ENCODE measurements at regions of chr6 and their contacts with region 1.

Region 1: GRCh38 chr6:159726918-159727716 is at the start of gene WTAP:
- DNase-seq: peak; percentile 98
- ATAC-seq: peak; percentile 86
- H3K4me3 Mint-ChIP-seq: peak within 1 kb of the TSS; percentile 88
- H3K27ac Mint-ChIP-seq: peak within 1 kb of the TSS; percentile 97
- H3K4me1 Mint-ChIP-seq: peaks cover 42% of the 10 kb centered on the region
- H3K27me3 Mint-ChIP-seq: no peaks in the 10 kb centered on the region
- total RNA-seq, gene WTAP: 103 to 128 TPM

Region 2: DNA sequence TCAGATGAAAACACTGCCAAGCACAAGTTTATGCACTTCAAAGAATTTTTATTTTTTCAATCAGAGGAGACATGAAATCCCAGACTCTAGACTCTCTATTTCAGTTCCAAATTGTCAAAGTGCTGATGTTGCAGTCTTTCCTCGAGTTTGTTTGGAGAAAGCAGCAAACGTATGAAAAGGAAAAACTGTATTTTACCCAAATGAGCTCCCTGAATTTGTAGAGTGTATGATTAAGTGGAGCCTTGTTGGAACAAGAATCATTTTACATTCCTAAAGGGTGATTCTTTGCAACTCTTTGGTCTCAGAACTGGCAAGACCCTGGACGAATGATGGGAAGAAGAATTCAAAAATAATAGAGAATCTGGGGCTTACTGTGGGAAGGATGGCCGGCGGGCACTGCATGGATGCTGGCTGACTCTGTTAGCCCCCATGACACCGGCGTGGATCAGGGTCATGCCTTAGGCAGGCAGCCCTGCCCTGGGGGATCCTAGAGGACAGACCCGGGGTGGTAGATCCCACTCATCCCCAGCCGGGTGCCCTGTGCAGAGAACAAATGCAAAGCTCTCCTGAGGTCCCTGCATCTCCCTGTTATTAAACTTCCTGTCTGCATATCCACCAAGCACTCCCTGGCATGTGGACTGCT is 350.5 kb before region 1 on chr6:
- CTCF ChIA-PET with region 1: no interaction called
- DNase-seq: no peak
- ATAC-seq: no peak
- H3K4me3 Mint-ChIP-seq: no peak overlapping the region
- H3K27ac Mint-ChIP-seq: no peak overlapping the region
- H3K4me1 Mint-ChIP-seq: no peaks in the 10 kb centered on the region
- H3K27me3 Mint-ChIP-seq: peaks cover 6% of the 10 kb centered on the region

Region 3: DNA sequence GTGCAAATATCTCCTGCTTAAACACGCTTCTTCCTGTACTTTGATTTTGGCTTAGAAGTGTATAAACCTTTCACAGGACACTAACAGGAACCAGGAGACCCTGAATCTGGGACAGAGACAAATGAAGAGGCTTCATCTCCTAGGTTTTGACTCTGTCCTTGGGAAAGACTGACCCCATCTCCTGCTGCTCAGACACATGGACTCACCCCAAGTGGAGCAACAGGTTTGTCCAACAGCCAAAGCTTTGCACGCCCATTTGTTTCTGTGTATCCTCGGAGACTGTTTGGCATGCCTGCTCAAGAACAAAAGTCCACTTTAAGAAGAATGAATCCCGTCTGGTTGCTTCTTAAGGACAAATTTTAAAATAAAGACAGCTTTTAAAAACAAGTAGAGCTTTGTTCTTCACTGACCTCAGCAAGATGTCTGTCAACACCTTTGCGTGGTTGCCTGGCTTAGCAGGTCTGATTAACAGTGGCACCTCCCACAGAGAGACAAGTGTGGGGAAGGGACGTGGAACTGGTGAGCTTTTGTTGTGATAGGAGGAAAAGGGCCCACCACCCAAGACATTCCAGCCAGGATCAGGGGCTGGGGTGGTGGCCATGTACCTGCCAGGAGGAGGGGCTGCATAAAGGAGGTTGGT is 236.7 kb before region 1 on chr6:
- CTCF ChIA-PET with region 1: no interaction called
- DNase-seq: no peak
- ATAC-seq: no peak
- H3K4me3 Mint-ChIP-seq: no peak overlapping the region
- H3K27ac Mint-ChIP-seq: no peak overlapping the region
- H3K4me1 Mint-ChIP-seq: no peaks in the 10 kb centered on the region
- H3K27me3 Mint-ChIP-seq: peaks cover 10% of the 10 kb centered on the region

Region 4: DNA sequence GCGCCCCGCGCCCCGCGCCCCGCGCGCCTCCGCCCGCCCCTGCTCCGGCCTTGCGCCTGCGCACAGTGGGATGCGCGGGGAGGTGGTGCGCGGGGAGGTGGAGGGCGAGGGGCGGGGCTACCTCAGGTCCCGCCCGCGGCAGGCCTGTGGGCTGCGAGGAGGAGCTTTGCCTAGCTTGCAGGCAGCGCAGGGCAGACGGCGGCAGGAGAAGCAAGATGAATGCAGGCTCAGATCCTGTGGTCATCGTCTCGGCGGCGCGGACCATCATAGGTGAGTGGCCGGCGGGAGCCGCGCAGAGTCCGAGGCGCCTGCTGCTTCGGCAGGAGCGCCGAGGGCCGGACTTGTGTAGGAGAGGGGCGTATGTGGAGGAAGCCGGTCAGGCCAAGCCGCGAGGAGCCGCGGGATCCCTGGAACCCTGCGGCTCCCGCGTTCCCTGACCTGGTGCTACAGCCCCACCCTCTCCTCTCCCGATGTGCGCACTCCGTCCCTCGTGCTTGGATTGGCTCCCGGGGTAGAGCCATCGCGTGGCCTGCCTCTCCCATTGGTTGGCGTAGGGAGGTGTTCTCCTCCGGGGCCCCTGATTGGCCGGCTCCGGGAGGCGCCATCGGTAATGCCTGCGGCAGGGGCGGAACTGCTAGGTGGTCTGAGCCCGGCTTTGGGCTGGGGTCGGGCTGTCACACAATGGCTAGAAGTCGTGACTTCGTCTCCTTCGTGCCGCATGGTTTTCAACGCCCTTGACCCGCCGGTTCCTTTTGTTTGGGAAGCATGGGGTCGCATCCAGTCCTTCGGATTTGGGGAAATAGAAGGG is 35.0 kb after region 1 on chr6 and contains the start of gene ACAT2:
- CTCF ChIA-PET with region 1: interaction called, 10 read pairs
- DNase-seq: peak; percentile 98
- ATAC-seq: peak; percentile 98
- H3K4me3 Mint-ChIP-seq: peak within 1 kb of the TSS; percentile 97
- H3K27ac Mint-ChIP-seq: peak within 1 kb of the TSS; percentile 97
- H3K4me1 Mint-ChIP-seq: peaks cover 42% of the 10 kb centered on the region
- H3K27me3 Mint-ChIP-seq: no peaks in the 10 kb centered on the region
- total RNA-seq, gene ACAT2: 95.4 to 128 TPM

Region 5: DNA sequence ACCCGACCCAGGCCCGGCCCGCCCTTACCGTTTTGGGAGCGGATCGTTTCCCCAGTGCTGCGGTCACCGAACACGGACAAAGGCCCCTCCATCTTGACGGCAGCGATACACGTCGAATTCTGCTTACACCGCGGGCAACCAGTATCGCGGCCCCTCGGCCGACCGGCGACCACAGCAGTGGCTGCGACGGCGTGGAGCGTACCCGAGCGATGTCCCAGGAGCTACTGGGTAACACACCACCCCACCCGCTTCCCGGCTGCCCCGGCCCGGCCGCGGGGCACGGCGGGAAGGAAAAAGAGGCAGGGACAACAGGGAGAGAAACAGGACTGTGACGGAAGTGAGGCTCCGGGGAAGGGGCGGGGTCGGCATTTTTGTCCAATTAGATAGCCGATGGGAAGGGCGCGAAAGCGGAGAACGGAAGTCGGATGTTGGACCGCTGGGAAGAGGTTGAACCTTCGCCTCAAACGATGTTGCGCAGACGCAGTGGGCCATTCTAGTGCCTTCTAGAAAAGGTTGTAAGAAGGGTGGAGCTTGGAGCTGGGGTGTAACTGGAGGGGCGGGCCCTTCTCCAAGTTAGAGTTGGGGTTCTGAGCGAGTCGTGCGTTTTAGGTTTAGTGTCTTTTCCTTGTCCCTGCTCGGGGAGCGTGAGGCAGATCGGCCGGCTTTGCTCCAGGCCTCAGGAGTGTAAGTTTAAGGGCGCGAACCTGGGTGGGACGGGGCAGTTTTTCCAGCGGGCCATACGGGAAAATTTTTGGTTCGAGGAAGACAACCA is 62.4 kb after region 1 on chr6 and contains the start of gene TCP1:
- CTCF ChIA-PET with region 1: interaction called, 15 read pairs
- DNase-seq: peak; percentile 100
- ATAC-seq: peak; percentile 80
- H3K4me3 Mint-ChIP-seq: peak within 1 kb of the TSS; percentile 95
- H3K27ac Mint-ChIP-seq: peak within 1 kb of the TSS; percentile 97
- H3K4me1 Mint-ChIP-seq: peaks cover 61% of the 10 kb centered on the region
- H3K27me3 Mint-ChIP-seq: no peaks in the 10 kb centered on the region
- total RNA-seq, gene TCP1: 239 to 320 TPM